Heart left ventricle (tissue), 16 donors: ENCODE measurements at regions of chrX and their contacts with region 1.

Region 1: GRCh38 chrX:13357925-13358324 is 38.1 kb upstream of the ATXN3L start:
- DNase-seq: no peak
- ATAC-seq: peak in 3 of 4 donors; percentile 40 to 74 (median 51)
- H3K4me3 ChIP-seq: no peak overlapping the region
- H3K27ac ChIP-seq: peak overlapping the region in 5 of 12 donors; percentile 8 to 45 (median 39)
- H3K4me1 ChIP-seq: peaks cover 0 to 14% (median 5%) of the 10 kb centered on the region in 12 donors
- H3K27me3 ChIP-seq: peaks cover 0 to 8% (median 0%) of the 10 kb centered on the region in 9 donors
- CTCF ChIP-seq: no peak
- POLR2A ChIP-seq: no peak

Region 2: DNA sequence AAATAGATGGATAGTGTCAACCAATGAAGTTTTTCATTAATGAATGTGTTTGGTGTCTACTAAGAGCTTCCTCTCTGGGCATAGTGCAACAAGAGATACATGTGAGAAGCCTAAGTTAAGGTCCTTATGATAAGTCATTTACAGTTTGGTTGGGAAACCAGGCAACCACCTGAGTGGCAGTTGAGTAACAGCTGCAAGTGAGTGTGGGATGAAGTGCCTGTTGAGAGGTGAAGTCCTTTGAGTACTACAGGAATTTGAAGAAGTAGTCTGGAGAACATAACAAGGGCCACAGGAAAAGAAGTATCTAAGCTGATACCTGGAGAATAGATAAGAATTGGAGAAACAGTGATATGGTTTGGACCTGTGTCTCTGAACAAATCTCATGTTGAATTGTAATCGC is 1268.2 kb before region 1 on chrX:
- intact Hi-C with region 1: no loop called
- DNase-seq: no peak
- ATAC-seq: no peak
- H3K4me3 ChIP-seq: no peak overlapping the region
- H3K27ac ChIP-seq: no peak overlapping the region
- H3K4me1 ChIP-seq: no peaks in the 10 kb centered on the region
- H3K27me3 ChIP-seq: no peaks in the 10 kb centered on the region
- CTCF ChIP-seq: no peak
- POLR2A ChIP-seq: no peak

Region 3: DNA sequence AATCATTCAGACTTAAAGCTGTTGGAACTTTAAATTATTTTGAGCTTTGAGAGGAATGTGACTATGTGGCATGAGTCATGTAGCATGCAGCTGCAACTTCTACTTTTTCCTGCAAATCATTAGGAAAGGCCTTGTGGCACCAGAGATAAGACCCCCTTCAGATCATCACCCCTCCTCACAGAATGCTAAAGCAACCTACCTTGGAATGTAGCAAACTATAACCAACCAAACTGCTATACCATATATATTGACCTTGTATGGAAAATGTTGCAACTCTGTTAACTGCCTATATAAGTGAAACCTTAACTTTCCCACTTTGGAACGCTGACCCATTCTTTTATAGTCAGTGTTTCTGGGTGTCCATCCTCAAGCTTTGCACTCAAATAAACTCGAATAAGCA is 70.1 kb before region 1 on chrX:
- intact Hi-C with region 1: no loop called
- DNase-seq: no peak
- ATAC-seq: no peak
- H3K4me3 ChIP-seq: no peak overlapping the region
- H3K27ac ChIP-seq: no peak overlapping the region
- H3K4me1 ChIP-seq: no peaks in the 10 kb centered on the region
- H3K27me3 ChIP-seq: peaks cover 0 to 12% (median 0%) of the 10 kb centered on the region in 9 donors
- CTCF ChIP-seq: no peak
- POLR2A ChIP-seq: no peak

Region 4: GRCh38 chrX:13432414-13433297 is 74.7 kb after region 1 on chrX:
- intact Hi-C with region 1: loop called in 1 of 10 experiments (anchors 1 kb)
- DNase-seq: peak in 4 of 5 donors; percentile 31 to 56 (median 45)
- ATAC-seq: peak; percentile 77 to 94 (median 91)
- H3K4me3 ChIP-seq: no peak overlapping the region
- H3K27ac ChIP-seq: peak overlapping the region in 10 of 12 donors; percentile 9 to 85 (median 64)
- H3K4me1 ChIP-seq: peaks cover 0 to 19% (median 10%) of the 10 kb centered on the region in 12 donors
- H3K27me3 ChIP-seq: peaks cover 0 to 16% (median 0%) of the 10 kb centered on the region in 9 donors
- CTCF ChIP-seq: no peak
- POLR2A ChIP-seq: no peak

Region 5: GRCh38 chrX:13473442-13474163 is 115.7 kb after region 1 on chrX:
- intact Hi-C with region 1: loop called in 4 of 10 experiments (anchors 5 to 10 kb)
- DNase-seq: peak in 1 of 5 donors; percentile 20
- ATAC-seq: peak; percentile 65 to 89 (median 79)
- H3K4me3 ChIP-seq: peak overlapping the region in 7 of 12 donors; percentile 2 to 27 (median 15)
- H3K27ac ChIP-seq: peak overlapping the region; percentile 57 to 81 (median 74)
- H3K4me1 ChIP-seq: peaks cover 0 to 28% (median 4%) of the 10 kb centered on the region in 12 donors
- H3K27me3 ChIP-seq: peaks cover 0 to 25% (median 0%) of the 10 kb centered on the region in 9 donors
- CTCF ChIP-seq: no peak
- POLR2A ChIP-seq: no peak